H1 (cell line): ENCODE measurements at regions of chr5 and their contacts with region 1.

Region 1: DNA sequence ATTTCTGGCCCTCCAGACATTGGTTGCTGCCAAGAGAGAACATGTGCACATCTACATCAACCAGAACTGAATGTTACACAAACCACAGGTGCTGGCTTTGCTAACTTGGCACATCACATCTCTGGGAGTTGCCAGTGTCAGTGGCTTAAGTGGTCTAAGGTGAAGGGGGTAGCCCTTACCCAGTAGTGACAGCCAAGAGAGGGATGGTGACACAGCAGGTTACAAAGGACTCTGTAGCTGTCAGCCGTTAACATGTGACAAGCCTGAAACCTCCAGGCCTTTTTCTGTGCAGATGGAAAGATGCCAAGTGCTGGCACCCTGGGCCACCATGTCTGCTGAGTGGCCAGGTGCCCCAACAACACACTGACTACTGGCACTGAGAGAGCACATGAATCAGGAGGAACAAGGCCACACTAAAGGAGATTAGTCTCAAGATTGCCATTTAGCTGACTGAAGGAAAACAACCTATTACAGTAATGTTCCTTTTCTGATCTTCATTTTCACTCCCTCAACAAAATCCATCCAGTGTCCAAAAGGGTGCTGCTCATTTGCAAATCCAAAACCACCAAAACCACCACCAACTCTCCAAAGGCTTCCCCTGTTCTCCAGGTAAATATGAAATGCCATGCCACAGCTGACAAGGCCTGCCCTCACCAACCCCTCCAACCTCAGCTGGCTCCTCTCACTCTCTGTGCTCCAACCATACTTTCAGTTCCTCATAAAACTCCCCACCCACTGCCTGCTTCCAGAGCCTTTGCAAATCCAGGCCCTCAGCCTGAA is 20.2 kb downstream of the SIL1 start:
- DNase-seq: no peak
- H3K4me3 ChIP-seq: no peak overlapping the region
- H3K27ac ChIP-seq: no peak overlapping the region
- H3K4me1 ChIP-seq: no peaks in the 10 kb centered on the region; a peak in 1 of 7 replicates
- H3K27me3 ChIP-seq: no peaks in the 10 kb centered on the region
- CTCF ChIP-seq: no peak
- EP300 ChIP-seq: no peak
- POLR2A ChIP-seq: no peak
- RAD21 ChIP-seq: no peak

Region 2: GRCh38 chr5:139193928-139194327 is 15.9 kb after region 1 on chr5:
- CTCF ChIA-PET with region 1: interaction called, 14 read pairs
- POLR2A ChIA-PET with region 1: no interaction called
- DNase-seq: no peak
- H3K4me3 ChIP-seq: no peak overlapping the region
- H3K27ac ChIP-seq: no peak overlapping the region
- H3K4me1 ChIP-seq: no peaks in the 10 kb centered on the region
- H3K27me3 ChIP-seq: no peaks in the 10 kb centered on the region
- CTCF ChIP-seq: peak; percentile 10 to 41 (median 25); a peak in 2 of 4 replicates
- EP300 ChIP-seq: no peak
- POLR2A ChIP-seq: no peak
- RAD21 ChIP-seq: peak; percentile 34 to 42